Activated naive CD4-positive, alpha-beta T cell treated with anti-CD3 and anti-CD28 coated beads, Interleukin-2, amount 10 ng/mL, durations not matched to agents 7 days and 5 days (primary cell): ENCODE measurements at regions of chr7 and their contacts with region 1.

Region 1: DNA sequence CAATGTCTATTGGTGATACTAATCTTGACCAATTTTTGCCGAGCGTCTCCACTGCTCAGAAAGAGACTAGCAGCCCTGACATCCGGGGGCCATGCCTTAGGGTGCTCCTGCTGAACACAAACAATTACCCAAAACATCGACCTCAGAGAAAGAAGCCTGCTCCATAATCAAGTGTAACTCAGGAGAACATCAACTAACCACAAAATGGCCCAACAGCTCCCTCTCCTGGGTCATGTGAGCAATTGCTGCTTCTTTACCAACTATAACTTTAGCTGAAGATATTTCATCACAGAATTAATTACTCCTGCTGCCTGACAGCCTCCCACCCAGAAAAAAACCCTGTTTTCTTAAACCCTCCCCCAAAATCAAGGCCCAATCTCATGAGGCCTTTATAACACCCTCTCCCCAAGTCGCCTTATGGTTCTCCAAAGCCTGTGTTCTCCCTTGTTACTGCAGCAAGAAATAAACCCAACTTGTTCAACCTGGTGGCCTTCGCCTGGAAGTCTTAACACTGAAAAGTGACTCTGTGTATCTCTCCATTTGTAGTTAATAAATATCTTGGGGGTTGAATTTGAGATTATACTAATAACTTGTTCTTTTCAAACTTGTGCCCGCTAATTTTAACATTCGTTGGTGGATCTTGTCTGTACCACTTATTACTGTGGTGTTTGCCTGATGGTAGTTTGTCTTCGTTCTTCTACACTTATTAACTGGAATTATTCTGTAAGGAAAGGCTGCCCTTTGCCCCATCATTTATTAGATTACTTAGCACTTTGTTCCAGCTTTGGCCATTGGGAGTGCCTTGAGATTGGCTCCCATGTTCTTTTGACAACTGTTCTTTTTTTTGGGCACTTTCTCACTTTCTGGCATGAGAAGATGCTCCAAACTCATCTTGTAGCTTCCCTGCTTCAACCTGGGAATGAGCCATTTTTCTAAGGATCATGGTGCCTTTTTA is 21.2 kb upstream of the RAMP3 start:
- DNase-seq: peak; percentile 82
- H3K4me3 Mint-ChIP-seq: no peak overlapping the region
- H3K27ac Mint-ChIP-seq: no peak overlapping the region
- H3K4me1 Mint-ChIP-seq: peaks cover 32% of the 10 kb centered on the region
- H3K27me3 Mint-ChIP-seq: peaks cover 38% of the 10 kb centered on the region

Region 2: DNA sequence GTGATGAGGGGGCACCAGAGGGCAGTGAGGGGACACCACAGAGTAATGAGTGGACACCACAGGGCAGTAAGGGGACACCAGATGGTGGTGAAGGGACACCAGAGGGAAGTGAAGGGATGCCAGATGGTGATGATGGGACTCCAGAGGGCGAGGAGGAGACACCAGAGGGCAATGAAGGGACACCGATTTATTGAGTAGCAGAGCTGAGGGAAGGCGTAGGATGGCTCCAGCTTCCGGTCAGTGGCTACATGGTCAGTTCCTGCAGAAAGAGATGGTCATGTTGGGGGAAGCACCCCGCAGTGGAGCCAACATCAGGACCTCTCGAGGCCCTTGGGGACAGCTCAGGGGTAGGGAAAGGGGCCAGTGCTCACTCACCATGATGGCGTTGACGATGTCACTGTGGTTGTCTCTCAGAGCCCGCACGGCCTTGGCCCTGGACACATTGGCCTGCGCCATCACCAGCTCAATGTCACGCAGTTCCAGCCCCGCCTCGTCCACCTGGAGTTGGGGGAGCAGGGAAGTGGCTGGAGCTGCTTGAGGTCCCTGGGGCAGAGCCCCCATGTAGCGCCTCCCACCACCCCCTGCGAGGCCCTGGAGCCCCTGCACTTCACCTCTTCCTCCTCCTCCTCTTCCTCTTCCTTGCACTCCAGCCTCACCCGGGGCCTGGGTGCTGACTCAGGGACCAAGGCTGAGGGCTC is 56.0 kb before region 1 on chr7:
- CTCF ChIA-PET with region 1: interaction called, 21 read pairs
- DNase-seq: peak; percentile 40
- H3K4me3 Mint-ChIP-seq: no peak overlapping the region
- H3K27ac Mint-ChIP-seq: peak overlapping the region; percentile 69
- H3K4me1 Mint-ChIP-seq: no peaks in the 10 kb centered on the region
- H3K27me3 Mint-ChIP-seq: peaks cover 13% of the 10 kb centered on the region

Region 3: DNA sequence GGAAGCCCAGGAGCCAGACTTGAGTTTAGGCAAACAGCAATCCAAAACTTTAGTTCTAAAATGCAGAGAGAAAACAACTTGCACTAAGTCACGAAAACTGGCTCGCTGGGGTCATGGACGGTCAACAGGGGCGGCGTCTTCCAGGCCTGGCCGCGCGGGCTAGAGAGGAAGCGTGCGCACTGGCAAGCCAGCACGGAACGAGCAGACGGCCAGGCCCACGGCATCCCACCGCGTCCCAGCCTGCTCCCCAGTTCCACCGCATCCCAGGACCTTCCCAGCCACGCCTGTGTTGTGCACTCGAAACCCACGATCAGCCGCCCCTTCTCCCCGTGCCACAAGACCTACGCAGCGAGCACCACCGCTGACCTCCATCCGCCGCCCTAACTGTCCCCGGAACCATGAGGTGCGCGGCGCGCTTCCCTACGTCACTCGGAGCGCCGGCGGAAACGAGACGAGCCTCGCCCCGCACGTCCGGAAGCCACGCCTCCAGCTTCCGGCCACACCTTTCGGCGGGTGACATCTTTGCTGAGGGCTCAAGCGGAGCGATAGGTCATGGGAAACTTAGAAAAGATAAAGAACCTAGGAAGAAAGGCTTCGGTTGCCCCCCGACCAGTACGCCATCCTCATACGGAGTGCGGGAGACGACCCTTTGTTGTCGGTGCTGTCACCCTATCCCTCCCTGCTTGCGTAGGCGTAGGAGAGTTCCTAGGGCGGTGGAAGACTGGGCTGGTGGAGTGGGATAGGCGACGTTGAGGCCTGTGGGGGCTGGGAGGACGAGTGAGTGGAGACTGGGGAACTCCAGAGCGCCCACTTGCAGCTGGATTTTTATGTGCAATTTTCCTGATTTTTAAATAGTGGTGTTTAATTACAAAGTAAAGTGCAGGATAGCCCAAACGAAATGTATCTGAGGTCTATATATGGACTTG is 24.8 kb before region 1 on chr7 and contains the start of gene TBRG4:
- CTCF ChIA-PET with region 1: interaction called, 13 read pairs
- DNase-seq: peak; percentile 96
- H3K4me3 Mint-ChIP-seq: peak within 1 kb of the TSS; percentile 97
- H3K27ac Mint-ChIP-seq: peak within 1 kb of the TSS; percentile 99
- H3K4me1 Mint-ChIP-seq: peaks cover 59% of the 10 kb centered on the region
- H3K27me3 Mint-ChIP-seq: peaks cover 32% of the 10 kb centered on the region

Region 4: GRCh38 chr7:45146531-45147379 is 10.4 kb after region 1 on chr7:
- CTCF ChIA-PET with region 1: no interaction called
- DNase-seq: peak; percentile 20
- H3K4me3 Mint-ChIP-seq: no peak overlapping the region
- H3K27ac Mint-ChIP-seq: no peak overlapping the region
- H3K4me1 Mint-ChIP-seq: no peaks in the 10 kb centered on the region
- H3K27me3 Mint-ChIP-seq: peaks cover 70% of the 10 kb centered on the region

Region 5: GRCh38 chr7:45160417-45160881 is 24.1 kb after region 1 on chr7:
- CTCF ChIA-PET with region 1: no interaction called
- DNase-seq: peak; percentile 17
- H3K4me3 Mint-ChIP-seq: no peak overlapping the region
- H3K27ac Mint-ChIP-seq: no peak overlapping the region
- H3K4me1 Mint-ChIP-seq: peaks cover 11% of the 10 kb centered on the region
- H3K27me3 Mint-ChIP-seq: peaks cover 73% of the 10 kb centered on the region